ENCODE measurements at regions of chr6 and their contacts with region 1.

Region 1: GRCh38 chr6:89432875-89433251 is at the start of gene ANKRD6:
- DNase-seq: peak; percentile 78 to 83 (median 78)
- H3K4me3 ChIP-seq: peak within 1 kb of the TSS; percentile 62
- H3K4me3 Mint-ChIP-seq: peak within 1 kb of the TSS; percentile 85 to 95 (median 89)
- H3K27ac ChIP-seq: peak within 1 kb of the TSS; percentile 24
- H3K27ac Mint-ChIP-seq: peak within 1 kb of the TSS in 7 of 8 donors; percentile 67 to 92 (median 83)
- H3K4me1 ChIP-seq: peaks cover 6% of the 10 kb centered on the region
- H3K4me1 Mint-ChIP-seq: peaks cover 24 to 39% (median 24%) of the 10 kb centered on the region in 3 donors
- H3K27me3 ChIP-seq: no peaks in the 10 kb centered on the region
- H3K27me3 Mint-ChIP-seq: peaks cover 3 to 4% of the 10 kb centered on the region in 2 donors
- total RNA-seq, gene ANKRD6: 3.0 to 3.4 TPM

Region 2: DNA sequence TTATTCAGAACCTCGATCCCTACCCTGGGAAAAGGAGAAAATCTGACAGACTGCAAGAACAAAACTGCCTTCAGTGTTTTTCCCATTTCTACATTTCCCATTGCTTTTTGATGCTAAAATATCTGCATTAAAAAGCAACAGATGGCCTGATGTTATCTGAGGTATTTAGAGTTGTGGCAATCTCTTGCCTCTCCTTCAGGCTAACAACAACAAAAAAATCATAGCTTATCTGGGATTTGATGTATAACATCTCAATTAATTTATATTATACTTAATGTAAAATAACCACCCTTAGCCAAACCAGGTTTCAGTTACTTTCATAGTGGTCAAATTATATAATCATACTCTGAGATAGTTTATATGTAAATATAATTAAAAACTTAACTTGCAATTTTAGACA is 102.0 kb before region 1 on chr6:
- CTCF ChIA-PET with region 1: no interaction called
- POLR2A ChIA-PET with region 1: no interaction called
- DNase-seq: no peak
- H3K4me3 ChIP-seq: no peak overlapping the region
- H3K4me3 Mint-ChIP-seq: no peak overlapping the region
- H3K27ac ChIP-seq: no peak overlapping the region
- H3K27ac Mint-ChIP-seq: no peak overlapping the region
- H3K4me1 ChIP-seq: no peaks in the 10 kb centered on the region
- H3K4me1 Mint-ChIP-seq: no peaks in the 10 kb centered on the region
- H3K27me3 ChIP-seq: no peaks in the 10 kb centered on the region
- H3K27me3 Mint-ChIP-seq: peaks cover 0 to 1% of the 10 kb centered on the region in 2 donors

Region 3: DNA sequence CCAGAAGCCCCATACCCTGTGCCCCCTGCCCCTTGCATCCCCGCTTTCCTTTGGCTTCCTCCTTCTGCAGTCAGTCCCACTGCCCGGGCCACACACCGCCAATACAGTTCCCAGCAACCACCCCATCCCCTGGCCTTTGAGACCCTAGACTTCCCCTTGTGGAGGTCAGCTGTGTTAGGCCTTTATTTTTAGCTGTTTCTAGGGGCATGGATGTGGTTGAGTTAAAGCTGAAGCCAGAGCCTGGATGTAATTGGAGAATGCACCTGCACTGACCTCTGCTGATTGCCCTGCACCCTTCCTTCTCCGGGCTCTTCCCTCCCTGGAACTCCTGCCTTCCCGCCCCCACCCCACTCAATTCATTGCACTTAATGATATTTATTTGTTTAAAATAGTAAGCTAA is 171.8 kb after region 1 on chr6:
- CTCF ChIA-PET with region 1: interaction called, 70 read pairs
- POLR2A ChIA-PET with region 1: no interaction called
- DNase-seq: no peak
- H3K4me3 ChIP-seq: no peak overlapping the region
- H3K4me3 Mint-ChIP-seq: no peak overlapping the region
- H3K27ac ChIP-seq: no peak overlapping the region
- H3K27ac Mint-ChIP-seq: no peak overlapping the region
- H3K4me1 ChIP-seq: no peaks in the 10 kb centered on the region
- H3K4me1 Mint-ChIP-seq: no peaks in the 10 kb centered on the region
- H3K27me3 ChIP-seq: no peaks in the 10 kb centered on the region
- H3K27me3 Mint-ChIP-seq: no peaks in the 10 kb centered on the region

Region 4: DNA sequence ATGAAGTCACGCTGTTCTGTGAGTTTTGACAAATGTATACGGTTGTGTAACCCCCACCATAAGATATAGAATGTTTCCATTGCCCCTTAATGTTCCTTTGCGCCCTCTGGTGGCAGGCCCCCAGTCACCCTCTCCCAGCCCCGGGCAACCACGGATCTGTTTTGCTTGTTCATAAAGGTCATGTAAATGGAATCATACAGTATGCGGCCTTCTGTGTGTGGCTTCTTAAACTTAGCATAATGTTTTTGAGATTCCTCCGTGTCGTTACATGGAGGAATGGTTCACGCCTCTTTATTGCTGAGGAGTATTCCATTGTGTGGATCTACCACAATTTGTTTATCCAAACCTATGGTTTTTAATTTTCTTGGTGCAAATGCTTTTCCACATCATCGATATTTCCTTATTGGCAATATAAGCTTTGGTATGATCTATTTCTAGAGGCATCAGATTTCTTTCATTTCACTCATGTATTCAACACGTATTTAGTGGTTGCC is 177.3 kb after region 1 on chr6:
- CTCF ChIA-PET with region 1: interaction called, 70 read pairs
- POLR2A ChIA-PET with region 1: no interaction called
- DNase-seq: peak; percentile 61 to 83 (median 71)
- H3K4me3 ChIP-seq: no peak overlapping the region
- H3K4me3 Mint-ChIP-seq: no peak overlapping the region
- H3K27ac ChIP-seq: no peak overlapping the region
- H3K27ac Mint-ChIP-seq: no peak overlapping the region
- H3K4me1 ChIP-seq: no peaks in the 10 kb centered on the region
- H3K4me1 Mint-ChIP-seq: peaks cover 0 to 5% (median 0%) of the 10 kb centered on the region in 3 donors
- H3K27me3 ChIP-seq: no peaks in the 10 kb centered on the region
- H3K27me3 Mint-ChIP-seq: no peaks in the 10 kb centered on the region

Region 5: GRCh38 chr6:89615882-89616281 is 183.0 kb after region 1 on chr6:
- CTCF ChIA-PET with region 1: interaction called, 70 read pairs
- POLR2A ChIA-PET with region 1: no interaction called
- DNase-seq: no peak
- H3K4me3 ChIP-seq: no peak overlapping the region
- H3K4me3 Mint-ChIP-seq: no peak overlapping the region
- H3K27ac ChIP-seq: no peak overlapping the region
- H3K27ac Mint-ChIP-seq: peak overlapping the region in 1 of 8 donors; percentile 63
- H3K4me1 ChIP-seq: no peaks in the 10 kb centered on the region
- H3K4me1 Mint-ChIP-seq: no peaks in the 10 kb centered on the region
- H3K27me3 ChIP-seq: no peaks in the 10 kb centered on the region
- H3K27me3 Mint-ChIP-seq: no peaks in the 10 kb centered on the region